CD8-positive, alpha-beta T cell (primary cell): ENCODE measurements at regions of chr12 and their contacts with region 1.

Region 1: GRCh38 chr12:126747530-126748149 is 1519.3 kb upstream of the TMEM132C start:
- DNase-seq: peak in 8 of 9 experiments; percentile 8 to 63 (median 47)
- ATAC-seq: no peak
- H3K4me3 ChIP-seq: no peak overlapping the region
- H3K4me3 Mint-ChIP-seq: no peak overlapping the region
- H3K27ac ChIP-seq: no peak overlapping the region
- H3K27ac Mint-ChIP-seq: no peak overlapping the region
- H3K4me1 ChIP-seq: no peaks in the 10 kb centered on the region
- H3K4me1 Mint-ChIP-seq: no peaks in the 10 kb centered on the region
- H3K27me3 ChIP-seq: no peaks in the 10 kb centered on the region
- H3K27me3 Mint-ChIP-seq: no peaks in the 10 kb centered on the region
- CTCF ChIP-seq: peak; percentile 80

Region 2: GRCh38 chr12:126617312-126617711 is 130.3 kb before region 1 on chr12:
- CTCF ChIA-PET with region 1: no interaction called
- POLR2A ChIA-PET with region 1: no interaction called
- intact Hi-C with region 1: no loop called
- DNase-seq: no peak
- ATAC-seq: no peak
- H3K4me3 ChIP-seq: no peak overlapping the region
- H3K4me3 Mint-ChIP-seq: no peak overlapping the region
- H3K27ac ChIP-seq: no peak overlapping the region
- H3K27ac Mint-ChIP-seq: no peak overlapping the region
- H3K4me1 ChIP-seq: no peaks in the 10 kb centered on the region
- H3K4me1 Mint-ChIP-seq: no peaks in the 10 kb centered on the region
- H3K27me3 ChIP-seq: no peaks in the 10 kb centered on the region
- H3K27me3 Mint-ChIP-seq: no peaks in the 10 kb centered on the region
- CTCF ChIP-seq: no peak

Region 3: GRCh38 chr12:126760100-126760499 is 12.5 kb after region 1 on chr12:
- CTCF ChIA-PET with region 1: interaction called, 11 read pairs
- POLR2A ChIA-PET with region 1: interaction called, 4 read pairs
- intact Hi-C with region 1: no loop called
- DNase-seq: no peak
- ATAC-seq: no peak
- H3K4me3 ChIP-seq: no peak overlapping the region
- H3K4me3 Mint-ChIP-seq: no peak overlapping the region
- H3K27ac ChIP-seq: no peak overlapping the region
- H3K27ac Mint-ChIP-seq: no peak overlapping the region
- H3K4me1 ChIP-seq: no peaks in the 10 kb centered on the region
- H3K4me1 Mint-ChIP-seq: peaks cover 9% of the 10 kb centered on the region
- H3K27me3 ChIP-seq: no peaks in the 10 kb centered on the region
- H3K27me3 Mint-ChIP-seq: no peaks in the 10 kb centered on the region
- CTCF ChIP-seq: no peak

Region 4: DNA sequence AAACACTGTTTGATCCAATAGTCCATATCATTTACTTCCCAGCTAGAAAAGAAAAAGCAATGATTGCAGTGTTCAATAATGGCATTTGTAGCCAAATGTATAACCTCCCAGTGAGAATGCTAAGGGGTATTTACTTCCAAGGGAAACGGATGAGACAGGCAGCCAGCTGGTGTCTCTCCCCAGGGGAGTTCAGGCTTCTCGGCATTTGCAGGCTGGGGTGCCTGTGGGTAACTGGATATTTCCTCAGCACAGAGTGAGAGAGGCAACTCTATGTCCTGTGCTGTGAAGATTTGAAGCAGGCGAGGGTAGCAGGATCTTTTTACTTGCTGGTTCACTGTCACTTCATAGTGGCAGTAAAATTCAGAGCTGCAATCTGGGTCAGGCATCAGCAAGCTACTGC is 63.8 kb after region 1 on chr12:
- CTCF ChIA-PET with region 1: no interaction called
- POLR2A ChIA-PET with region 1: no interaction called
- intact Hi-C with region 1: no loop called
- DNase-seq: no peak
- ATAC-seq: no peak
- H3K4me3 ChIP-seq: no peak overlapping the region
- H3K4me3 Mint-ChIP-seq: no peak overlapping the region
- H3K27ac ChIP-seq: no peak overlapping the region
- H3K27ac Mint-ChIP-seq: no peak overlapping the region
- H3K4me1 ChIP-seq: no peaks in the 10 kb centered on the region
- H3K4me1 Mint-ChIP-seq: no peaks in the 10 kb centered on the region
- H3K27me3 ChIP-seq: no peaks in the 10 kb centered on the region
- H3K27me3 Mint-ChIP-seq: peaks cover 3% of the 10 kb centered on the region
- CTCF ChIP-seq: no peak